Esophagus muscularis mucosa (tissue), 4 donors: ENCODE measurements at regions of chr2 and their contacts with region 1.

Region 1: GRCh38 chr2:100013892-100014677 is 128.3 kb downstream of the AFF3 start:
- DNase-seq: no peak
- H3K4me3 ChIP-seq: no peak overlapping the region
- H3K27ac ChIP-seq: no peak overlapping the region
- H3K4me1 ChIP-seq: peaks cover 17 to 69% (median 65%) of the 10 kb centered on the region in 4 donors
- H3K27me3 ChIP-seq: no peaks in the 10 kb centered on the region
- CTCF ChIP-seq: peak in 2 of 3 experiments; percentile 7 to 12
- EP300 ChIP-seq: no peak
- POLR2A ChIP-seq: no peak

Region 2: DNA sequence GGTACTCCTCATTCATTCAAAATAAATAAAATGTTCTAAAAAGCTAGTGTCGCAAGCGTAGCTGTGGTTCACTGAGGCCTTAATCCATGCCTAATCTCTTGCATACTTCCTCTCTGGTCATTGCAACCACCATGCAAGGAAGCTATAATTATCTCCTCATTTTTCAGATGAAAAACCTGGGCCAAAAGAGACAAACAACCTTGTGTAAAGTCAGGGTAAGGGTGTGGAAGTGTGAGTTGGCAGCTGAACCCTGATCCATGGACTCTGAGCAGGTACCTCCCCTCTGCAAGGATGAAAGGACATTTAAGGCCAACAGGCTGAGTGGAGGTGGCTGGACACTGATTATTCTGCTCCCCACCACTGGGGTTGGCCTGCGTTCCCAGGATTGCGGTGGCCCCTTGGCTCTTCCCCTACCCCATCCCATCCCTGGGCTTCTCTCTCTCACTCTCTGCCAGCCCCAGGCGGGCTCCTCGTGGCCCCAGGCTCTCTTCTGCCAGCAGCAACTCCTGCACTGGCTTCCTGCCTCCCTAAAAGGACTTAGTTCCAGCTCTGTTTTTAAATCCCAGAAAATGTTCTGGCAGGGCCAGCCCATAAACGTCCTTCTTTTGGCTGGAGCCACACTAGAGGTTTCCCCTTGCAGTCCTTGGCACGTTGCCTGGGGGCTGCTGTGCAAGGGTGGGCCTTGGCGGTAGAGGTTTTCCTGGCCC is 200.3 kb after region 1 on chr2:
- intact Hi-C with region 1: loop called (anchors 10 kb)
- DNase-seq: no peak
- H3K4me3 ChIP-seq: peak overlapping the region in 1 of 4 donors; percentile 4
- H3K27ac ChIP-seq: peak overlapping the region; percentile 78 to 86 (median 84)
- H3K4me1 ChIP-seq: peaks cover 21 to 40% (median 38%) of the 10 kb centered on the region in 4 donors
- H3K27me3 ChIP-seq: no peaks in the 10 kb centered on the region
- CTCF ChIP-seq: no peak
- EP300 ChIP-seq: peak; percentile 69
- POLR2A ChIP-seq: no peak

Region 3: DNA sequence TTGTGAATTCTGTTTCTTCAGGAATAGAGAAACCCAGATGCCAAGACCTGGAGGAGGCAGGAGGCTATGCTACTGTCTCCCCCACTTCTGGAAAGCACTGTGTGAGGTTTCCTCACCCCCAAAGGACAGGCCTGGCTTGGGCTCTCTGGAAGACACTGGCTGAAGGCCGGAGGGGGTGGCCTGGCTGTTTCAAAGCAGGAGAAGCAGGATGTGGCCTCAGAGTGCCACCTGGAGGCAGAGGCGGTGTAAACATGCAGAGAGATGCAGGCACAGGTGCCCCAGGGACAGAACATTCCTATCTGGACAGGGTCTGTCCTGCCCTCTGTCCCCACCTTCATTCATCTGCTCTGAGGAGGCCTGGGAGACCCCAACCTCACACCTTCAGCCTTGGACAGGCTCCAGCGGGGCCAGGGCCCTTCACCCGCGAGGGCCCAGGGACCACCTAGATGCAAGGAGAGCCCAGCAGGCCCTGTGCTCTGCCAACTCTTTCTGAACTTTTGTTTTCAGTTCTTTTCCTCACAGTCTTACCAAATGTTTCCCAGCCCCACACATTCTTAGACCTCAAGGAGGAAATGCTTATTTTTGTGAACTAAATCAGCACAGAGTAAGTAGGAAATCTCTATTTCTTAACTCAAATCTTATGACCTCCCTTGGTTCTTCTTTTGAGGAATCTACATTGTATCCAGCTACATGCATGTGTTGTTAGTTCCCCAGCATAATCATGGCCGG is 229.0 kb after region 1 on chr2:
- intact Hi-C with region 1: loop called (anchors 10 kb)
- DNase-seq: no peak
- H3K4me3 ChIP-seq: no peak overlapping the region
- H3K27ac ChIP-seq: no peak overlapping the region
- H3K4me1 ChIP-seq: peaks cover 6 to 18% (median 7%) of the 10 kb centered on the region in 4 donors
- H3K27me3 ChIP-seq: no peaks in the 10 kb centered on the region
- CTCF ChIP-seq: peak; percentile 76 to 79 (median 76)
- EP300 ChIP-seq: no peak
- POLR2A ChIP-seq: no peak